ENCODE measurements at regions of chr3 and their contacts with region 1.

Region 1: DNA sequence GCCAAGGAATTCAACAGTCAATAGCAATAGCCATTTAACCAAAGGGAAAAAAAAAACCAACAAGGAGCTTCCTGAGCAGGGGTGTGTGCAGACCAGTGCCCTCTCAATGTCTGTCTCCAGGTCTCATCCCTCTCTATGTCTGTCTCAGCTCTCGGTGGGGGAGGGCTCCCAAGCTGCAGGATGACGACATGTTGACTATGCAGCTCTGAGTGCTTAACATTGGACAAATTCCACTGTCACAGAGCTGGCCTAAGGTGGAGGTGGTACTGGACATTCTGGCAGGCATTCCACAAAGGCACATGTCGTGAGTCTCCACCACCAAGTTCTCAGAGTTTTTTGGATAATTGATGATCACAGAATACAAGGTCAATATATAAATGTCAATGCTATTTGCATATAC is 2.0 kb upstream of the CAPN7 start:
- DNase-seq: no peak
- H3K4me3 ChIP-seq: no peak overlapping the region
- H3K27ac ChIP-seq: no peak overlapping the region
- H3K4me1 ChIP-seq: peaks cover 5% of the 10 kb centered on the region
- H3K27me3 ChIP-seq: no peaks in the 10 kb centered on the region
- CTCF ChIP-seq: no peak

Region 2: DNA sequence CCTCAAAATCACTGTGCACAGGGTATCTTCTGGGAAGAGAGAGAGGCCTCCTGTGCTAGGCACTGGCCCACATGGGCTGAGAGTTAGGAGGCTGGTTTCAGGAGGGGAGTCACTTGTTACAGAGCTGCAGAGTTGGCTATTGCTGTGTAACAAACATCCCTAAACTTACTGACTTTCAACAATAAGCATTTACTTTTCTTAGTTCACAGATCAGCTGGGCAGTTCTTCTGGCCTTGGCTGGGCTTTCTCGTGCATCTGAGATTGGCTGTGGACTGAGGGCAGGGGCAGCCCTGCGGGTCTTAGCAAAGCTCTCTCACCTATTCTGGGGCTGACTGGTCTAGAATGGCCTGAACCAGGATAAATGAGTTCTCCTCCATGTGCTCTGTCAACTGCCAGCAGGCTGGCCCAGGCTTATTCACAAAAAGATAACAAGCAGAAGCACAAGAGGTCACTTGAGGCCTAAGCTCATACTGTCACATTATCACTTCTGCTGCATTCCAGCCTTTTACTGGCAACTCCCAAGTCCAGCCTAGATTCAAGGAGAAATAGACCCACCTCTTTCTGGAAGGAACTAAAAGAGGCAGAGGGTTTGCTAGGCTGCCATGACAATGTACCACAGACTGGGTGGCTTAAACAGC is 87.9 kb before region 1 on chr3:
- intact Hi-C with region 1: loop called (anchors 5 kb)
- DNase-seq: no peak
- H3K4me3 ChIP-seq: no peak overlapping the region
- H3K27ac ChIP-seq: no peak overlapping the region
- H3K4me1 ChIP-seq: no peaks in the 10 kb centered on the region
- H3K27me3 ChIP-seq: no peaks in the 10 kb centered on the region
- CTCF ChIP-seq: no peak

Region 3: DNA sequence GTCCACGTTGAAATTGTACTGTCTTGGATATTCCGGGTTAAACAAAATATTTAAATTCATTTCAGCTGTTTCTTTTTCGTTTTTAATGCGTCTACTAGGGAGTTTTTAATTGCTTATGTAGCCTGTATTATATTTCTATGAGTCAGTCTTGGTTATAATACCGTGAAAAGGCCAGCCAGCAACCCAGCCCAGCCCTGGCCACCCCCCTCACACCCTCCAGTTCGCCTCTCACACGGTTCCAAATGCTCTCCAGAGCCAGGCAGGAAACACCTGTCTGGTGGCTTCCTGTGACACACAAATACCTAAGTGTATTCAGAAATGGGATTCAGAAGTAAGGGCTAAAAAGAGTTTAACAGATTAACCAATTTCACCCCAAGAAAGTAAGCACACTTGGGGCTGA is 123.9 kb after region 1 on chr3:
- intact Hi-C with region 1: no loop called
- DNase-seq: no peak
- H3K4me3 ChIP-seq: no peak overlapping the region
- H3K27ac ChIP-seq: no peak overlapping the region
- H3K4me1 ChIP-seq: no peaks in the 10 kb centered on the region
- H3K27me3 ChIP-seq: no peaks in the 10 kb centered on the region
- CTCF ChIP-seq: no peak

Region 4: GRCh38 chr3:15405448-15406050 is 201.5 kb after region 1 on chr3:
- intact Hi-C with region 1: loop called (anchors 5 kb)
- DNase-seq: no peak
- H3K4me3 ChIP-seq: no peak overlapping the region
- H3K27ac ChIP-seq: no peak overlapping the region
- H3K4me1 ChIP-seq: no peaks in the 10 kb centered on the region
- H3K27me3 ChIP-seq: no peaks in the 10 kb centered on the region
- CTCF ChIP-seq: peak; percentile 61

Measured in colonic mucosa (tissue), 4 donors.